Activated T-helper 2 cell treated with anti-CD3 and anti-CD28 coated beads, Interferon-gamma antibody, Interleukin-2, Interleukin-4, amounts not matched to agents 10 μg/mL and 5 μg/mL and 100 μg/mL, durations not matched to agents 14 hours and 24 hours and 36 hours (primary cell): ENCODE measurements at regions of chr17 and their contacts with region 1.

Region 1: GRCh38 chr17:49496183-49496866 is 1.2 kb downstream of the NGFR start:
- DNase-seq: peak; percentile 76
- H3K4me3 Mint-ChIP-seq: peak overlapping the region; percentile 62
- H3K27ac Mint-ChIP-seq: no peak overlapping the region
- H3K4me1 Mint-ChIP-seq: peaks cover 11% of the 10 kb centered on the region
- H3K27me3 Mint-ChIP-seq: peaks cover 76% of the 10 kb centered on the region

Region 2: DNA sequence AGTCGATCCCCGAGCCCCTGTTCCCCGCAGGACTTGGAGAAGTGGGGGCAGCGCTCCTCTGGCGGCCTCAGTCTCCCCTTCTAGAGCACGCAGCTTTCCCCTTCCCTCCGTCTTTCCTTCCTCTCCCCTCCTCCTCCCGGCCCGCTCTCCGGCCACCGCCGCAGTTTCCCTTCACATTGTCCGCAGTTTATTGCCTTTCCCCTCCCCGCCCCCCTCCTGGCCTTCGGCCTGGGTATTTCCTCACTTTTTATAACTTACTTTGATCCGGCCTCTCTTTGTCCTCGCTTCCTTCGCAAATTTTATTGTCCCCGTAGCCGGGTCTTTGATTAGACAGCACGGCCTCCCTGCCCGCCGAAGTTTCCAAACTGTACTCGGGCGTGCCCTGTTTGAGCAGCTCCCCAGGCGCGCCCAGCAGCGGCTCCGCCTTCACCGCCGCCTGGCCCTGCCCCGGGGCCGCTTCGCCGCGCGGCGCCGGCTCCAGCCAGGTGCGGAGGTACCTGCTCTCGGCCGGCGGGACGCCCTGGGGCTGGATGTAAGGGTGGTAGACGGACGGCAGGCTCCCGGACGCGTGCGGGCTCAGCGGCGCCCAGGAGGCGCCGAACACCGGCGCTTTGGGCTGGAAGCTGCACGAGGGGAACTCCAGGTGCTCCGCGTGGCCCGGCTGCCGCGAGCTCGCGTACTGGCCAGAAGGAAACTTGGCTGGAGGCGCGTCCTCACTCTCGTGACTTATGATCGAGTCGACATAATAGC is 870.7 kb before region 1 on chr17:
- intact Hi-C with region 1: loop called (anchors 10 kb)
- DNase-seq: no peak
- H3K4me3 Mint-ChIP-seq: peak overlapping the region; percentile 82
- H3K27ac Mint-ChIP-seq: no peak overlapping the region
- H3K4me1 Mint-ChIP-seq: peaks cover 12% of the 10 kb centered on the region
- H3K27me3 Mint-ChIP-seq: peaks cover 81% of the 10 kb centered on the region

Region 3: DNA sequence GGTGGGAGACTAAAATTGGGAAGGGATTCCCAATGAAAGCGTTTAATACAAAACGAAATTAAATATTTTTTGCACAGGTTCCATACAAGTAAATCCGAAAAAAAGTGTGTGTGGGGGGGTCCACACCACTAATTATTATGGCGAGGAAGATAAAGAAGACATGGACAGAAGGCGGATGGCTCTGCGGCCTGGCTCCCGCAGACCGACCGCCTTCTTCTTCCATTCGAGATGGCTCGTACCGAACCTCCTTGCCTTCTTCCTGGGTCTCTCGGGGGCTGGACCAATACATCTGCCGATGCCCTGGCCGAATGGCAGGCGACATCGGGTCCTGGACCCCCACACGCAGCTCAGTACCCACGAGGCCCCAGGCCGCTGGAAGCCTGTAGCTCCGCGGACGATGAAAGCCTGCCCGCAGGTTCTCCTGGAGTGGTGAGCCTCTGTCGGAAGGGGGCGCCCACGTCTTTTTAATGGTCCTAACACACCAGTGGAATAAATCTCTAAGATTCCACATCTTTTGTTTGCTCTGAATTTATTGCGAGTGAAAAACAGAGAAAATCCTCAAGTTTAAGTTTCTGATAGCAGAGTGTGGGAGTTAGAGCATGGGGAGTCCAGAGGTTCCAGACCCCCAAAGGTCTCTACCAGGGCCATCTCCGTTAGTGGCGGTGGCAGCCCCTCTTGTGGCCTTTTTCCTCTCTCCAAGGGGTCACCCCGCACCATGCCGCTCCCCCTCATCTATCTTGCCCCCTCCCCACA is 771.9 kb before region 1 on chr17:
- intact Hi-C with region 1: loop called (anchors 5 kb)
- DNase-seq: peak; percentile 68
- H3K4me3 Mint-ChIP-seq: no peak overlapping the region
- H3K27ac Mint-ChIP-seq: no peak overlapping the region
- H3K4me1 Mint-ChIP-seq: peaks cover 12% of the 10 kb centered on the region
- H3K27me3 Mint-ChIP-seq: peaks cover 89% of the 10 kb centered on the region

Region 4: DNA sequence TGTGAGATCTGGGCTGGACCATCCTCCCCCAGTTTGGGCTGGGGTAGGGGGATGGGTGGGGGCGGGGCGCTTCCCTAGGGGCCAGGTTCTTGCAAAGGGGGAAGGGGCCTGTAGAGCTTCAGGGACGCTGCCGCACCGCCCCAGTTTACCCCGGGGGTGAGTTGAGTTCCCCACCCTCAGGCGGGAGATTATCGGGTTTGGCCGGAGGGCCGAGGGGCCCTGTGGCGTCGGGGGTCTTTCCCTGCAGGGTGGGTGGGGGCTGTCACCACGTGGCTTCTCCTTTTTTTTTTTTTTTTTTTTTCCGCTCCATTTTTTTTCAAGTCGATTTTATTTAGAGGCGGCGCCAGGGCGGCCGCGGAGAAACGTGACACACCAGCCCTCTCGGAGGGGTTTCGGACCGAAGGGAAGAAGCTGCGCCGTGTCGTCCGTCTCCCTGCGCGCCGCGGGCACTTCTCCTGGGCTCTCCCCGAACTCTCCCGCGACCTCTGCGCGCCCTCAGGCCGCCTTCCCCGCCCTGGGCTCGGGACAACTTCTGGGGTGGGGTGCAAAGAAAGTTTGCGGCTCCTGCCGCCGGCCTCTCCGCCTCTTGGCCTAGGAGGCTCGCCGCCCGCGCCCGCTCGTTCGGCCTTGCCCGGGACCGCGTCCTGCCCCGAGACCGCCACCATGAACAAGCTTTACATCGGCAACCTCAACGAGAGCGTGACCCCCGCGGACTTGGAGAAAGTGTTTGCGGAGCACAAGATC is 499.1 kb before region 1 on chr17 and contains the start of gene IGF2BP1:
- intact Hi-C with region 1: loop called (anchors 5 kb)
- DNase-seq: no peak
- H3K4me3 Mint-ChIP-seq: peak within 1 kb of the TSS; percentile 30
- H3K27ac Mint-ChIP-seq: peak within 1 kb of the TSS; percentile 39
- H3K4me1 Mint-ChIP-seq: peaks cover 9% of the 10 kb centered on the region
- H3K27me3 Mint-ChIP-seq: peaks cover 81% of the 10 kb centered on the region
- total RNA-seq, gene IGF2BP1: 0.09 and 0.32 TPM in 2 replicates

Region 5: DNA sequence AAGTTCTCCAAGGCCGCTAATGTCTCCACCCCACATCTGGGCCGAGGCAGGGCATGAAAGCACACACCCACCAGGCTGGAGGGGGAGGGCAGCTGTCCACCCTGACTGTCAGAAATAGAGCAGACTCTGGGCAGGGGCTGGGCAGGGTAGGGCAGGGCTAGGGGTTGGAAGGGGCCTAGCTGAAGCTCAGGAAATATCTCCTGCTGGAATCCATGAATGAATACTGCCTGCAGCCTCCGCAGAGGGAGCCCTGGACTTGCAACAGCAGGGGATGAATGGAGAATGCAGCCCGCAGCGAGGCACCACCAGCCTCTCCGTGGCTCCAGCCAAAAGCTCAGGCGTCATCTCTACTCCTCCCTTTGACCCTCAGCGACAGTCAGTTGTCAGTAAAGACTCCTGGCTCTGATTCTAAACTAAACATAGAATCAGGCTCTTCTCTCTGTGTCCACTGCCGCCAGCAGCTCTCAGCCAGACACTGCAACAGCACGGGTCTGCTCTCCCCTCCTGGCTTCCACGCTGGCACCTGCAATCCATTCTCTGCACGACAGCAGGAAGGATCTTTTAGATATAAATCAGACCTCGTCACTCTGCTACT is 25.1 kb before region 1 on chr17:
- intact Hi-C with region 1: no loop called
- DNase-seq: no peak
- H3K4me3 Mint-ChIP-seq: no peak overlapping the region
- H3K27ac Mint-ChIP-seq: no peak overlapping the region
- H3K4me1 Mint-ChIP-seq: no peaks in the 10 kb centered on the region
- H3K27me3 Mint-ChIP-seq: peaks cover 55% of the 10 kb centered on the region

Region 6: GRCh38 chr17:49556223-49556971 is 60.1 kb after region 1 on chr17:
- intact Hi-C with region 1: loop called (anchors 5 kb)
- DNase-seq: peak; percentile 76
- H3K4me3 Mint-ChIP-seq: no peak overlapping the region
- H3K27ac Mint-ChIP-seq: no peak overlapping the region
- H3K4me1 Mint-ChIP-seq: peaks cover 3% of the 10 kb centered on the region
- H3K27me3 Mint-ChIP-seq: peaks cover 16% of the 10 kb centered on the region

Region 7: GRCh38 chr17:49968380-49969133 is 472.2 kb after region 1 on chr17:
- intact Hi-C with region 1: loop called (anchors 5 kb)
- DNase-seq: peak; percentile 58
- H3K4me3 Mint-ChIP-seq: peak overlapping the region; percentile 82
- H3K27ac Mint-ChIP-seq: no peak overlapping the region
- H3K4me1 Mint-ChIP-seq: peaks cover 19% of the 10 kb centered on the region
- H3K27me3 Mint-ChIP-seq: peaks cover 88% of the 10 kb centered on the region

Region 8: DNA sequence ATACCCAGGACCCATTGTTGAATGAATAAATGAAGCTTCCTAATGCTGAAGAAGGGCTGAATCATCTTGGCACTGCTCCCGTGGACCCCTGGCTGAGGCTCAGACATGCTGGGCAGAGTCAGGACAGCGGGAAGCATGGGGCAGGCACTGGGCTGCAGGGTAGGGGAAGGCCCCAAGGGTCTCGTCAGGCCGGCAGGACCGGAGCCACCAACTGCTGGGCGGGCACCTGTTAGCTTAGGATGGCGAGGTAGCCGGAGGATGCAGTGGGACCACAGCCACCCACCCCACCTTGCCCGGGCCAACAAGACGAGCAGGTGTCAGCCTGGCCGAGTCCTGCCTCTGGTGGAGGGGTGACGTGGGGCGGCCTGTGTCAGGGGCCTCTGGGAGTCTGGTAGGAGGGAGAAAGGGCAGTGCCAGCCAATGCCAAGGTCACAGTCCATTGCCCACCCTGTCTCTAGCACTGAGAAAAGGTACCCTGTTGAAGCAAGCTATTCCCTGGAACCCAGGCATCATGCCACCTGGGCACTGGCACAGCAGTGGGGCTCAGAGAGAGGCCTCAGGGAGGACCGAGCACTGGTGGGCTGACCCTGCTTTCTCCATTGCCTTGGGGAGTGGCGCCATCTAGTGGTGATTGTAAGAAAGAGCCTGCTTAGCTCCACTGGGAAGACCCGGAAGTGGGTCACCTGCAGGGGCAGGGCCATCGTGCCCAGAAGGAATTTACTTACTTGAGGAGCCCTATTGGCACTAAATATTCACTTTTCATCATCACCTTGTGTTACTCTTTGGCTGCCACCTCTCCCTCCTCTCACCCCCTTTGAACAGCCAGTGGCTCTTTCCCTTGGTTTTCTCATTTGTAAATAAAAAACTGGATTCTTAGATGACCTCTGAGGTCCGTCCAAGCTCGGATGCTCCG is 501.7 kb after region 1 on chr17:
- intact Hi-C with region 1: loop called (anchors 10 kb)
- DNase-seq: peak; percentile 77
- H3K4me3 Mint-ChIP-seq: no peak overlapping the region
- H3K27ac Mint-ChIP-seq: no peak overlapping the region
- H3K4me1 Mint-ChIP-seq: peaks cover 20% of the 10 kb centered on the region
- H3K27me3 Mint-ChIP-seq: peaks cover 65% of the 10 kb centered on the region